ENCODE measurements at regions of chr6 and their contacts with region 1.

Region 1: DNA sequence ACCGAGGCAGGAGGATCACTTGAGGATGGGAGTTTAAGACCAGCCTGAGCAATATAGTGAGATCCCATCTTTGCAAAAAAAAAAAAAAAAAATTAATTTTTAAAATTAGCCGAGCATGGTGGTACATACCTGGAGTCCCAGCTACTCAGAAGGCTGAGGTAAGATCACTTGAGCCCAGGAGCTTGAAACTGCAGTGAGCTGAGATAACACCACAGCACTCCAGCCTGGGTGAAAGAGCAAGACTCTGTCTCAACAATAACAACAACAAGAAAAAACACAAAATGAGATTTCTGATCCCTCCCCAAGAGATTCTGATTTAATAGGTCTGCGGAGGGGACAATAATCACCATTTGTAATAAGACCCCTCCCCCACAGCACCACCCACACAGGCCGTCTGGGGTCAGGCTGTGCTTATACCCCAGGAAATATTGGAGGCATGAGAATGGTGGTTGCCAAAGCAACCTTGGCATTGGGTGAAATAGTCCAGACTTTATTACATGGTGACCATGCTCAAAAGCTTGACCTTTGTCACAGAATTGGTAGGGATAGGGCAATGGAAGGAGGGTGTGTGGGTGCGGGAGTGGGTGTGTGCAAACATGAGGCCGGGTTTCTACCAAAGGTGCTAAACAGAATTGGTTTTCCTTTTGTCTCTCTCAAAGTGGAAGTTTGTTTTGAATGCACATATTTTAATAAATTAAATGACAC is 24.4 kb upstream of the ADTRP start:
- DNase-seq: no peak
- ATAC-seq: no peak
- H3K4me3 ChIP-seq: no peak overlapping the region
- H3K27ac ChIP-seq: no peak overlapping the region
- H3K4me1 ChIP-seq: no peaks in the 10 kb centered on the region
- H3K27me3 ChIP-seq: no peaks in the 10 kb centered on the region
- CTCF ChIP-seq: no peak
- POLR2A ChIP-seq: no peak
- RAD21 ChIP-seq: no peak

Region 2: GRCh38 chr6:11783524-11784064 is 19.4 kb before region 1 on chr6:
- CTCF ChIA-PET with region 1: interaction called, 10 read pairs
- POLR2A ChIA-PET with region 1: no interaction called
- dilution Hi-C with region 1: no loop called
- in situ Hi-C with region 1: no loop called
- intact Hi-C with region 1: no loop called
- DNase-seq: no peak
- ATAC-seq: no peak
- H3K4me3 ChIP-seq: no peak overlapping the region
- H3K27ac ChIP-seq: no peak overlapping the region
- H3K4me1 ChIP-seq: no peaks in the 10 kb centered on the region
- H3K27me3 ChIP-seq: no peaks in the 10 kb centered on the region
- CTCF ChIP-seq: no peak
- POLR2A ChIP-seq: no peak
- RAD21 ChIP-seq: no peak